ENCODE measurements at regions of chr12 and their contacts with region 1.

Region 1: DNA sequence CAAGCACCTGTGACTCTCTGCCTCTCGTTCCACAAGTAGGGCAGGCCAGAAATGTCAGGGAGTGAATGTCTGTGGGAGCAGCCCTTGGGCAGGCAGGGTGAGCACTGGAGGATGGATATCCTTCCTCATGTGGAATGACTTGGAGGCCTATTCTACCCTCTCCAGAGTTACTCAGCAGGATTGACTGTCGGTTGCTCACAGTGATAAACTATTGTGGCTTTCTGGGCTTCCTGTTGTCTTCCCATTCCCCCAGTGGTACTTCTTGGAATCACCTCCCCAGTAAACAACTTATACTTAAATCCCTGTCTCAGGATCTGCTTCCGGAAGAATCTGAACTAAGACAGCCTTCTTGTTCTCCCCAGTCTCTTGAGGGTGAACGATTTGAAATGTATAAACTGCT is 79.6 kb upstream of the MANSC4 start:
- DNase-seq: no peak
- ATAC-seq: no peak
- H3K4me3 ChIP-seq: no peak overlapping the region
- H3K27ac ChIP-seq: no peak overlapping the region
- H3K4me1 ChIP-seq: no peaks in the 10 kb centered on the region
- H3K27me3 ChIP-seq: no peaks in the 10 kb centered on the region
- CTCF ChIP-seq: peak in 1 of 3 experiments; percentile 6; a peak in 1 of 6 replicates
- POLR2A ChIP-seq: no peak
- RAD21 ChIP-seq: no peak

Region 2: GRCh38 chr12:29026419-29026818 is 1166.8 kb after region 1 on chr12:
- CTCF ChIA-PET with region 1: no interaction called
- POLR2A ChIA-PET with region 1: no interaction called
- RAD21 ChIA-PET with region 1: no interaction called
- intact Hi-C with region 1: loop called (anchors 5 kb)
- DNase-seq: no peak
- ATAC-seq: no peak
- H3K4me3 ChIP-seq: no peak overlapping the region
- H3K27ac ChIP-seq: no peak overlapping the region
- H3K4me1 ChIP-seq: no peaks in the 10 kb centered on the region
- H3K27me3 ChIP-seq: no peaks in the 10 kb centered on the region
- CTCF ChIP-seq: no peak
- POLR2A ChIP-seq: no peak
- RAD21 ChIP-seq: no peak

Measured in HCT116 (cell line).